SK-N-SH (cell line): ENCODE measurements at regions of chr2 and their contacts with region 1.

Region 1: DNA sequence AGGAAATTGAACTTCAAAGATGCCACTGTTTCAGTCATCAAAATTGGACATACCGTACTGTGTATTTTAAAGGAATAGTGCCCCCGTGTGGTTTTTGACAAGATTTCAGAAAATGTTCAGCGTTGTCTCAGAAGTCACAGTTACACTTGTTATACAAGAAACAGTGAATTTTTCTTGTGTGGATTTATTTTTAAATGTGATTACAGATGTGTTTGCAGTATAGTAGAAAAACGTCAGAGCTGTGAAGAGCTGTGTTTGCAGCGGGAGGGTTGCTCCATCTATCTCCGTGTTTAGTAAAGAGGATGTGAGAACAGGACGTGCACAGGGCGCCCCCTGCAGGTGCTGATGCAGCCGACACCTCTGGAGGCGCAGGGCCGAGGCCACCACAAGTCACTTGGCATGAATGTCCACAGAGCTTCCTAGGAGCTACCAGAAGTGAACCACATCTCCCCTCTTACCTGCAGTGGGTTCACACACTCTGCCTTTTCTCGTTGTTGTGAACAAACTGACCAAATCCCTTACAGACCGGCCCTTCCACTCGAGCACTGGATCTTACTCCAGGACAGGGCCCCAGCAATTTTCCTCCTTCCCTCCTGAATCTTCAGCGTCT is 73.1 kb downstream of the CACNB4 start:
- DNase-seq: peak; percentile 72
- H3K4me3 ChIP-seq: peak overlapping the region; percentile 35 to 59
- H3K27ac ChIP-seq: no peak overlapping the region
- H3K4me1 ChIP-seq: no peaks in the 10 kb centered on the region
- H3K27me3 ChIP-seq: no peaks in the 10 kb centered on the region
- CTCF ChIP-seq: peak; percentile 100
- EP300 ChIP-seq: no peak
- RAD21 ChIP-seq: peak; percentile 59

Region 2: GRCh38 chr2:151556121-151556520 is 469.7 kb before region 1 on chr2:
- CTCF ChIA-PET with region 1: no interaction called
- POLR2A ChIA-PET with region 1: no interaction called
- DNase-seq: no peak
- H3K4me3 ChIP-seq: no peak overlapping the region
- H3K27ac ChIP-seq: no peak overlapping the region
- H3K4me1 ChIP-seq: peaks cover 0 to 6% of the 10 kb centered on the region in 2 experiments; a peak in 2 of 4 replicates
- H3K27me3 ChIP-seq: no peaks in the 10 kb centered on the region
- CTCF ChIP-seq: no peak
- EP300 ChIP-seq: no peak
- RAD21 ChIP-seq: no peak

Region 3: DNA sequence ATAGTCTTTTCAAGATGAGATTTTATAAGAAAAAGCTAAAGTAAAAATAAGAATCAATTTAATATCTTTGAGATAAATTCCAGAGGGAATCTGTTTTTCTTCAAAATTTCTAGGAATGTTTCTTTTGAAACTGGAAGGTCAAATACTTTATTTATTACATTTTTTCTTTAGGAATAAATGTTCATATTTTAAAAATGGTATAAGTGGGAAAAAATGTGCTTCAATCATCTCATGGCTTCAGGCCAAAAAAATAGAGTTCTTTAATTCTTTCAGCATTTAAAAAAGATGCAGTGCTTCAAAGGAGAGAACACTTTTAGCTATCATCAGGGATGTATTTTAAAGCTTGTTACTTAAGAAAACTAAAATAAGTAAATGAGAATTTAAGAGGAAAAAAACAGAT is 402.2 kb before region 1 on chr2:
- CTCF ChIA-PET with region 1: interaction called, 10 read pairs
- POLR2A ChIA-PET with region 1: no interaction called
- DNase-seq: no peak
- H3K4me3 ChIP-seq: no peak overlapping the region
- H3K27ac ChIP-seq: peak overlapping the region in 1 of 2 experiments; percentile 47; a peak in 1 of 4 replicates
- H3K4me1 ChIP-seq: peaks cover 2 to 13% of the 10 kb centered on the region in 2 experiments; a peak in 2 of 4 replicates
- H3K27me3 ChIP-seq: no peaks in the 10 kb centered on the region
- CTCF ChIP-seq: no peak
- EP300 ChIP-seq: no peak
- RAD21 ChIP-seq: no peak

Region 4: DNA sequence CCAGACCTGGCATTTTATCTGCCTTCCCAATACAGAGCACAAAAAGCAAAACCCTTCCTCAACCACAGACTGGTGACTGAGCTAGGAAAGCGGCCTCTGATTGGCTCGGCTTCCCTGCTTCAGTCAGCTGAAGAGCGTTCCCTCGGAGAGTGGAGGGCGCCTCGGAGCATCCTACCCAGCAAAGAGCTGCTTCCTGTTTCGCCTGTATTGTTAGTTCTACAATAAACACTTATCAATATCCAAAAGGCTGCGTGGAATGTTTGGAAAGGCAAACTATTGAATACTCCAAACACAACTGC is 51.9 kb before region 1 on chr2:
- CTCF ChIA-PET with region 1: interaction called, 16 read pairs
- POLR2A ChIA-PET with region 1: no interaction called
- DNase-seq: peak; percentile 73
- H3K4me3 ChIP-seq: peak overlapping the region; percentile 11 to 40; a peak in 3 of 4 replicates
- H3K27ac ChIP-seq: peak overlapping the region in 1 of 2 experiments; percentile 89; a peak in 2 of 4 replicates
- H3K4me1 ChIP-seq: peaks cover 0 to 9% of the 10 kb centered on the region in 2 experiments; a peak in 2 of 4 replicates
- H3K27me3 ChIP-seq: no peaks in the 10 kb centered on the region; the same call in 1 of the 2 replicates
- CTCF ChIP-seq: no peak
- EP300 ChIP-seq: no peak
- RAD21 ChIP-seq: no peak; the same call in 1 of the 2 replicates

Region 5: DNA sequence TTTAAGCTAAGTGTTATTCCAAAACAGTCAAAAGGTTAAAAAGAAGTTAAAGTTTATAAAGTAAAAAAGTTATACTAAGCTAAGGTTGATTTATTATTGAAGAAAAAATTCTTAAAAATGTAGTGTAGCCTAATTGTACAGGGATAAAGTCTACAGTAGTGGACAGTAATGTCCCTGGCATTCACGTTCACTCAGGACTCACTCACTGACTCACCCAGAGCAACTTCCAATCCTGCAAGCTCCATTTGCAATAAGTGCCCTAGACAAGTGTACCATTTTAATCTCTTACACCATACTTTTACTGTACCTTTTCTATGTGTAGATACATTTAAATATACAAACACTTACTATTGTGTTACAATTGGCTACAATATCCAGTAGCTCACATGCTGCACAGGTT is 13.1 kb before region 1 on chr2:
- CTCF ChIA-PET with region 1: interaction called, 93 read pairs
- POLR2A ChIA-PET with region 1: no interaction called
- DNase-seq: no peak
- H3K4me3 ChIP-seq: no peak overlapping the region
- H3K27ac ChIP-seq: no peak overlapping the region
- H3K4me1 ChIP-seq: no peaks in the 10 kb centered on the region
- H3K27me3 ChIP-seq: peaks cover 4% of the 10 kb centered on the region; the same call in 1 of the 2 replicates
- CTCF ChIP-seq: no peak
- EP300 ChIP-seq: no peak
- RAD21 ChIP-seq: no peak

Region 6: DNA sequence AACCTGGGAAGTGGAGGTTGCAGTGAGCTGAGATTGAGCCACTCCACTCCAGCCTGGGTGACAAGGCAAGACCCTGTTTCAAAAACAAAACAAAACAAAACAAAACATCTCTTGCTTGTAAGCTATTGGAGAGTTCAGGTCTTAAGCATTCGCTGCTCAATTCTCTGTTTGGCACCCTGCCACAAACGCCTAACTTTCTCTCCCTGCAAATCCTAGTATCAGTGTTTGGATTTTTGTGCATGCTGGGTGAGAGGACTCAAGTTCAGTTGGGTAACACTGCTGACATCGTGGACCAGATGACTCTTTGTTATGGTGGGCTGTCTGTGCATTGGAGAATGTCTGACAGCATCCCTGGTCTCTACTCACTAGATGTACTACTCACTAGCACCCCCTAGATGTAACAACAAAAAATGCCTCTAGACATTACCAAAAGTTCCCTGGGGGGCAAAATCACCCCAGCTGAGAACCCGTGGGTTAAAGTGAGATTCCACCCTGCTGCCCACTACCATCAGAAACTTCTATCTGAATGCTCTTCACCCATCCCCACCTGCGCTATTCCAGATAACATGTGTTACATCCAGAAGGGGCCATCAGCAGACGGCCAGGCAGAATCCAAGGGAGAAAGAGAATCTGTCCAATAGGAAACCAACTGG is 22.2 kb after region 1 on chr2:
- CTCF ChIA-PET with region 1: interaction called, 24 read pairs
- POLR2A ChIA-PET with region 1: interaction called, 3 read pairs
- DNase-seq: peak; percentile 21
- H3K4me3 ChIP-seq: no peak overlapping the region
- H3K27ac ChIP-seq: no peak overlapping the region
- H3K4me1 ChIP-seq: peaks cover 0 to 4% of the 10 kb centered on the region in 2 experiments; a peak in 2 of 4 replicates
- H3K27me3 ChIP-seq: peaks cover 12% of the 10 kb centered on the region
- CTCF ChIP-seq: peak; percentile 52
- EP300 ChIP-seq: no peak
- RAD21 ChIP-seq: no peak

Region 7: GRCh38 chr2:152175458-152176325 is 149.9 kb after region 1 on chr2 and contains the start of gene STAM2:
- CTCF ChIA-PET with region 1: interaction called, 16 read pairs
- POLR2A ChIA-PET with region 1: interaction called, 3 read pairs
- DNase-seq: peak; percentile 94
- H3K4me3 ChIP-seq: peak within 1 kb of the TSS; percentile 77 to 94
- H3K27ac ChIP-seq: peak within 1 kb of the TSS; percentile 92 to 97
- H3K4me1 ChIP-seq: peaks cover 0 to 6% of the 10 kb centered on the region in 2 experiments; a peak in 2 of 4 replicates
- H3K27me3 ChIP-seq: no peaks in the 10 kb centered on the region
- CTCF ChIP-seq: peak; percentile 93
- EP300 ChIP-seq: no peak; a peak in 1 of 4 replicates
- RAD21 ChIP-seq: peak; percentile 89
- polyA plus RNA-seq, gene STAM2: 6.9 and 10.1 TPM in 2 replicates

Region 8: GRCh38 chr2:152421521-152422370 is 396.0 kb after region 1 on chr2:
- CTCF ChIA-PET with region 1: no interaction called
- POLR2A ChIA-PET with region 1: no interaction called
- DNase-seq: peak; percentile 41
- H3K4me3 ChIP-seq: no peak overlapping the region; a peak in 2 of 4 replicates
- H3K27ac ChIP-seq: peak overlapping the region; percentile 85 to 89
- H3K4me1 ChIP-seq: peaks cover 30 to 39% of the 10 kb centered on the region in 2 experiments
- H3K27me3 ChIP-seq: no peaks in the 10 kb centered on the region
- CTCF ChIP-seq: no peak
- EP300 ChIP-seq: peak; percentile 25 to 87; a peak in 2 of 4 replicates
- RAD21 ChIP-seq: no peak